Activated B cell treated with CpG ODN at 0.5 μM for 24 hours (primary cell): ENCODE measurements at regions of chr3 and their contacts with region 1.

Region 1: GRCh38 chr3:160707187-160707794 is 30.3 kb downstream of the ARL14 start:
- DNase-seq: no peak
- ATAC-seq: peak; percentile 60
- H3K4me3 Mint-ChIP-seq: no peak overlapping the region
- H3K27ac Mint-ChIP-seq: no peak overlapping the region
- H3K4me1 Mint-ChIP-seq: no peaks in the 10 kb centered on the region
- H3K27me3 Mint-ChIP-seq: peaks cover 16% of the 10 kb centered on the region
- CTCF ChIP-seq: no peak

Region 2: GRCh38 chr3:161409069-161409468 is 701.8 kb after region 1 on chr3:
- CTCF ChIA-PET with region 1: no interaction called
- POLR2A ChIA-PET with region 1: no interaction called
- intact Hi-C with region 1: loop called (anchors 5 kb)
- DNase-seq: no peak
- ATAC-seq: no peak
- H3K4me3 Mint-ChIP-seq: no peak overlapping the region
- H3K27ac Mint-ChIP-seq: no peak overlapping the region
- H3K4me1 Mint-ChIP-seq: no peaks in the 10 kb centered on the region
- H3K27me3 Mint-ChIP-seq: peaks cover 8% of the 10 kb centered on the region
- CTCF ChIP-seq: no peak